Right cardiac atrium (tissue), 5 donors: ENCODE measurements at regions of chr2 and their contacts with region 1.

Region 1: DNA sequence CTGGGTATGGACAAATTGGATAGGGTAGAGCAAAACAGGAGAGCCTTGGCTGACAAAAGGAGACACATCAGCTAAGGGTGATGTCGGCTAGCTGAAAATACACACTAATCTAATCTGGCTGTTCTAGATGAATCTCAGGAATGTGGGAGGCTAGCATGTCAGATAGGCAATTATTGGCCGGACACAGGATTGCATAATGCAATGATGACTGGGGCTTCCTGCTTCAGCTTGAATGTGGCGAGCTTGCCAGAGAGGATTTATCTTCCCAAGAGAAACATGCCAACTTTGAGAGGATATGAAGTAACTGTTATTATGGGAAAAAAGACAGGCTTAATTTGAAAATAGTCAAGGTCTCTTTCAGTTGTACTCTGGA is 102.4 kb downstream of the TRIB2 start:
- DNase-seq: peak; percentile 78 to 86 (median 83)
- ATAC-seq: peak; percentile 98
- H3K4me3 ChIP-seq: no peak overlapping the region
- H3K27ac ChIP-seq: peak overlapping the region; percentile 89
- H3K4me1 ChIP-seq: peaks cover 16% of the 10 kb centered on the region
- H3K27me3 ChIP-seq: no peaks in the 10 kb centered on the region

Region 2: GRCh38 chr2:12728221-12728777 is 90.8 kb before region 1 on chr2:
- intact Hi-C with region 1: loop called in 2 of 4 experiments (anchors 10 kb)
- DNase-seq: no peak
- ATAC-seq: no peak
- H3K4me3 ChIP-seq: no peak overlapping the region
- H3K27ac ChIP-seq: no peak overlapping the region
- H3K4me1 ChIP-seq: peaks cover 42% of the 10 kb centered on the region
- H3K27me3 ChIP-seq: no peaks in the 10 kb centered on the region

Region 3: DNA sequence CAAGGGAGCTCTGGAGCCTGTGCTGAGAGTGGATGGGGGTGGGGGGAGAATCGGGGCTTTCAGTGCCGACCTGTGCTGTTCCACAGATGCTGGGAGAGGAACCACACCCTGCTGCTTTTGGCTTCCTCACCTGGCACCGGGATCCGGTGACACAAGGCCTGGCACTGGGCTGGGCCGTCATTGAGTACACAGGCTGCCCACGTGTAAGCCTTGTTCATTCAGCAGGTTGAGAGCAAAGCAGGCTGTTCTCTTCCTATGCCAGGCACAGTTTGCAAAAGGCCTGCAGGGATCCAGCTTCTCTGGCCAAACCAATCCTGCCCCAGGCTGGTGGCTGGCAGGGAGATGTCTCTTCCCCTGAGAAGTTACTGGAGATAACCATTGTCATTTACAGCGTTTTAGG is 85.2 kb before region 1 on chr2:
- intact Hi-C with region 1: loop called in 2 of 4 experiments (anchors 10 kb)
- DNase-seq: peak; percentile 46 to 78 (median 69)
- ATAC-seq: peak; percentile 40 to 45
- H3K4me3 ChIP-seq: no peak overlapping the region
- H3K27ac ChIP-seq: peak overlapping the region; percentile 62
- H3K4me1 ChIP-seq: peaks cover 40% of the 10 kb centered on the region
- H3K27me3 ChIP-seq: no peaks in the 10 kb centered on the region